Activated T-helper 1 cell treated with anti-CD3 and anti-CD28 coated beads, Interleukin-12 subunit alpha, Interleukin-12 subunit beta, Interleukin-2, Interleukin-4 antibody, amounts not matched to agents 30 ng/mL and 10 ng/mL and 1 ng/mL, durations not matched to agents 14 hours and 24 hours and 36 hours (primary cell): ENCODE measurements at regions of chr16 and their contacts with region 1.

Region 1: DNA sequence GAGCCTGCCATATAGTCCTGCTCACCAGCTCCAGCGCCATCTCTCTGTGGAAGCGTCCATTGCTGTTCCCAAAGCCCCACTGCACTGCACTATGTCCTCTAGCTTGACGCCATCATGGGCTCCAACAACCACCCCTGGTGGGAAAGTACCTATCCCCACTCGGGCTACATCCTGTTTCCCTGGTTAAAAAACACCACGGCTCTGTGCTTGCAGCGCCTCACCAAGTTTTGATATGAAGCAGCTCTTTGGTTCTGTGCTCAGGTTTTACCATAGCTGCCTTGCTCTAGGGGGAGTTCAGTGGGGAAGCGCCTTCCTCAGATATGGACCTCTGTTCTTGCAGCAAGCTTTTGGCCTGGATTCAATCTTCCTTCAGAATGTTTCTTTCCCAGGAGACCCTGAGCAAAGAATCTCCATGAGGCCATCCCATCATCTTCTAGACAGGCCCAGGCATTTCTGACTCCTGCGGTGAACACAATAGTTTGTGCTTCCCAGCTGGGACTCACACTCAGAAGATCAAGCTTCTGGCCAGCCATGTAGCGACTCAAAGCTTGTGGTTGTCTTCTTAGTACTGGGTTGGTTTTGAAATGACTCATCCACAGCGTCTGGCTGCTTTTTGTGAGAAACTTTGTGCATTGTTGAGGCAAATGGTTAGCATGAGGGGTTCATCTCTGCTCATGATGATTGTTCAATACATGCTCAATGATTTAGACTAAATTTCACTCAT is 39.5 kb downstream of the DYNLRB2 start:
- DNase-seq: peak; percentile 82
- H3K4me3 Mint-ChIP-seq: peak overlapping the region; percentile 81
- H3K27ac Mint-ChIP-seq: peak overlapping the region; percentile 100
- H3K4me1 Mint-ChIP-seq: peaks cover 55% of the 10 kb centered on the region
- H3K27me3 Mint-ChIP-seq: no peaks in the 10 kb centered on the region

Region 2: DNA sequence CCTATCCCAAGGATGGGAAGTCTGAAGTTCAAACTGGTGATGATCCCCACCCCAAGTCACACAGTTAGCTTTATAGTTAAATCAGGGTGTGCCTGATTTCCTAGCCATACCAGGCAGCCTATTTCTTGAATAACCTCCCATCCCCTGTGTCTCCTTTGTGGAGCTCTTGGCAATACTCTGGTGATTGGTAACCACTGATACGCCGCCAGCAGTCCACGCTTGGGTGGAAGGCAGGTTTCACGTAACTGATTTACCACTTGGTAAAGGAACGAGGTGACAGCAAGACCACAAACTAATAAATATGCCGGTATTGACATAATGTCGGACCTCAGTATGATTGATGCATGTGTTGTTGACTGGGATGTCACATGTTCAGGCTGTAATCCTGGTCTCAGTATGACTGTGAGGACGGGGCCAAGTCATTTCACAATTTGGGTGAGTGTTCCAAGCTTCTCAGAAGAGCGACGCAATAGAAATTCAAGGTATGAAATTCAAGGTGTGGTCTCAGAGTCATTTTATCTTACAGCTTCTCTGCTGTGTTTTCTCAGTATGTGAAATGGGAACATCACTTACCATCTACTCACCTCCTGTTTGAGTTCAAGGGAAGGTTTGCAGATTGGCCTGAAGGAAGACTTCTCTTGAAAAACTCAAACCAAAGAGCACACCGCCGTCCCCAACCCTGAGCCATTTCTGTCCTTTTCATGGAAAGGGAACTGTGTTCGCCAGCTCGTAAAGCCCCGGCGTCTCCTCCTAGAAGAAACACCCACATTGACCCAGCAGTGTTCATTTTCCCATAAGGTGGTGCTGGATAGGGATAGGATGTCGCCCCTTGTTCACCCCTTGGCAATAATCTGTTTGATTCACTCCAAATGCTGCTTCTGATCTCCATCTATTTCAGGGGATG is 1801.9 kb before region 1 on chr16:
- intact Hi-C with region 1: loop called (anchors 5 kb)
- DNase-seq: peak; percentile 63
- H3K4me3 Mint-ChIP-seq: peak overlapping the region; percentile 57
- H3K27ac Mint-ChIP-seq: peak overlapping the region; percentile 77
- H3K4me1 Mint-ChIP-seq: peaks cover 73% of the 10 kb centered on the region
- H3K27me3 Mint-ChIP-seq: no peaks in the 10 kb centered on the region

Region 3: GRCh38 chr16:79269211-79269863 is 1310.9 kb before region 1 on chr16:
- intact Hi-C with region 1: loop called (anchors 5 kb)
- DNase-seq: peak; percentile 58
- H3K4me3 Mint-ChIP-seq: peak overlapping the region; percentile 60
- H3K27ac Mint-ChIP-seq: peak overlapping the region; percentile 89
- H3K4me1 Mint-ChIP-seq: peaks cover 88% of the 10 kb centered on the region
- H3K27me3 Mint-ChIP-seq: peaks cover 12% of the 10 kb centered on the region

Region 4: DNA sequence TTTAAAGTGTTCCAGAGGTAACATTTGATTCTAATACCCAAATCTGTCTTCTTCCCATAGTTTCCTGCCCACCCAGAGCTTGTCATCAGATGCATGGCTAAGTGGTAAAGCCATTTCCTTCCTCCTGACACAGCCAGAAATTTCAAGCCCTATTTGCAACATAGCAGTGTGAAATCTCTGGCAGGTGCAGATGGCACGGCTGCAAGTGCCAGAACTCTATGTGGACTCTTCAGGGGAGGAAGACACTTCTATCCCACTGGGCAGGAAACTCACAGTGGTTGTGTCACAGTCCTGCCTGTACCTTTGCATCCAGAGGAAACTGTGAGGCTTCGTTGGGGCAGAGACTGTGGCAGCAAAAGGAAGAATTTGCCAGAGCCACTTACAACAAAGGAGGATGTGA is 26.2 kb before region 1 on chr16:
- intact Hi-C with region 1: no loop called
- DNase-seq: no peak
- H3K4me3 Mint-ChIP-seq: no peak overlapping the region
- H3K27ac Mint-ChIP-seq: no peak overlapping the region
- H3K4me1 Mint-ChIP-seq: peaks cover 41% of the 10 kb centered on the region
- H3K27me3 Mint-ChIP-seq: no peaks in the 10 kb centered on the region

Region 5: GRCh38 chr16:80569440-80570105 is 10.7 kb before region 1 on chr16:
- intact Hi-C with region 1: loop called (anchors 1 kb)
- DNase-seq: peak; percentile 74
- H3K4me3 Mint-ChIP-seq: peak overlapping the region; percentile 51
- H3K27ac Mint-ChIP-seq: peak overlapping the region; percentile 93
- H3K4me1 Mint-ChIP-seq: peaks cover 60% of the 10 kb centered on the region
- H3K27me3 Mint-ChIP-seq: no peaks in the 10 kb centered on the region

Region 6: GRCh38 chr16:80671281-80671849 is 91.1 kb after region 1 on chr16:
- intact Hi-C with region 1: loop called (anchors 1 kb)
- DNase-seq: no peak
- H3K4me3 Mint-ChIP-seq: no peak overlapping the region
- H3K27ac Mint-ChIP-seq: no peak overlapping the region
- H3K4me1 Mint-ChIP-seq: peaks cover 34% of the 10 kb centered on the region
- H3K27me3 Mint-ChIP-seq: no peaks in the 10 kb centered on the region

Region 7: DNA sequence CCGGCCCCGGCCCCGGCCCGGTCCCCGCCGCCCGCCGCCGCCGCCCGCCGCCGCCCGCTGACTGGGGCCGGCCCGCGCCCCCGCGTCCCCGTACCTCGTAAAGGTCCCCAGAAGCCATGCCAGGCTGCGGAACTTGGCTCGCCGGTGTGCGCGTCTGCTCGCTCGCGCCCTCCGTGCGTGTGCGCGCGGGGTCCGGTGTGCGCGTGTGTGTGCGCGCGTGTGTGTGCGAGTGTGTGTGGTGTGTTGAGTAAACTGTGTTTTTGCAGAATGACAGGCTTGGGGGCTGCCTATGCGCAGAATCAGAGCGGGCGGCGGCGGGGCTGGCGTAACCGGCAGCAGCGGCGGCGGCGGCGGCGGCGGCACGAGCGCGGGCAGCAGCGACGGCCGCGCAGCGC is 223.8 kb after region 1 on chr16:
- intact Hi-C with region 1: loop called (anchors 1 kb)
- DNase-seq: peak; percentile 56
- H3K4me3 Mint-ChIP-seq: peak overlapping the region; percentile 95
- H3K27ac Mint-ChIP-seq: peak overlapping the region; percentile 98
- H3K4me1 Mint-ChIP-seq: peaks cover 57% of the 10 kb centered on the region
- H3K27me3 Mint-ChIP-seq: no peaks in the 10 kb centered on the region

Region 8: GRCh38 chr16:81035398-81035974 is 455.2 kb after region 1 on chr16 and contains the start of gene ATMIN:
- intact Hi-C with region 1: loop called (anchors 1 kb)
- DNase-seq: peak; percentile 85
- H3K4me3 Mint-ChIP-seq: peak within 1 kb of the TSS; percentile 88
- H3K27ac Mint-ChIP-seq: peak within 1 kb of the TSS; percentile 65
- H3K4me1 Mint-ChIP-seq: peaks cover 27% of the 10 kb centered on the region
- H3K27me3 Mint-ChIP-seq: no peaks in the 10 kb centered on the region
- total RNA-seq, gene ATMIN: 31.2 and 32.3 TPM in 2 replicates